Activated CD8-positive, alpha-beta memory T cell treated with anti-CD3 and anti-CD28 coated beads, Interleukin-2, amount 10 ng/mL, durations not matched to agents 7 days and 5 days (primary cell): ENCODE measurements at regions of chr6 and their contacts with region 1.

Region 1: DNA sequence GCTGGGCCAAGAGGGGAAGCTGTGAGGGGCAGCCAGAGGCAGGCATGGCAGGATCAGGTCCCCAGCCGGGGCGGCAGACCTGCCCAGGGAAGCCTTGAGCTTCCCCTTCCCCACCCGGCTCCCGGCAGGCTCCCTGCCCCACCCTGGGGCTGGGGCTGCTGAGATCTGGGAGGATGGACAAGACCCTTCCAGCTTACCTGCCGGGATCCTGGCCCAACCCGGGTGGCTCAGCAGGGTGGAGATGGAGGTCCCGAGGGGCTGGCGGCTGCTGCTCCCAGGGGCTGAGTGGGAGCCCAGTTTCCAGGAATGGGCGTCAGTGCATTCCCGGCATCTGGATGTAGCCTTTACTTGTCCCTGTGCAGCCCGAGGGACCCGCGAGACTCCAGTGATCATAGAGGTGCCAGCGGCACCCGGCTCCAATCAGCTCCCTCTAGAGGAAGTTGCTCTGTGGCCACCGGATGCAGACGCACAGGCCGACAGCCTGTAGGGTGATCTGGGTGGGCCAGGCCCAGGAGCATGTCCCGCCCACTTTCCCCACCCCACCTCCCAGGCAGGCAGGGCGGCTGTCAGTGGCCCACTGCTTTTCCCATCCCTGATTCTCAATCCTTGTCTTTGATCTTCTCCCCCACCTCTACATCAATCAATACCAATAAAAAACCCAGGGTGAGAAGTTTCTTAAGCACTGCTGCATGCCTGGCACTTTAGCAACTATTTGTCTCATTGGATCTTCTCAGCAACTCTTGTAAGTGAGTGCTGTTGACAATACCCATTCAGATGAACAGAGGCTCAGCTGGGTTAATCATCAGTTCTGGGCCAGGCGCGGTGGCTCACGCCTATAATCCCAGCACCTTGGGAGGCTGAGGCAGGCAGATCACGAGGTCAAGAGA is at the start of gene BAK1:
- DNase-seq: peak; percentile 95
- ATAC-seq: peak; percentile 96
- H3K4me3 Mint-ChIP-seq: peak within 1 kb of the TSS; percentile 99
- H3K27ac Mint-ChIP-seq: peak within 1 kb of the TSS; percentile 97
- H3K4me1 Mint-ChIP-seq: peaks cover 39% of the 10 kb centered on the region
- H3K27me3 Mint-ChIP-seq: no peaks in the 10 kb centered on the region
- total RNA-seq, gene BAK1: 70.9 to 74.4 TPM

Region 2: DNA sequence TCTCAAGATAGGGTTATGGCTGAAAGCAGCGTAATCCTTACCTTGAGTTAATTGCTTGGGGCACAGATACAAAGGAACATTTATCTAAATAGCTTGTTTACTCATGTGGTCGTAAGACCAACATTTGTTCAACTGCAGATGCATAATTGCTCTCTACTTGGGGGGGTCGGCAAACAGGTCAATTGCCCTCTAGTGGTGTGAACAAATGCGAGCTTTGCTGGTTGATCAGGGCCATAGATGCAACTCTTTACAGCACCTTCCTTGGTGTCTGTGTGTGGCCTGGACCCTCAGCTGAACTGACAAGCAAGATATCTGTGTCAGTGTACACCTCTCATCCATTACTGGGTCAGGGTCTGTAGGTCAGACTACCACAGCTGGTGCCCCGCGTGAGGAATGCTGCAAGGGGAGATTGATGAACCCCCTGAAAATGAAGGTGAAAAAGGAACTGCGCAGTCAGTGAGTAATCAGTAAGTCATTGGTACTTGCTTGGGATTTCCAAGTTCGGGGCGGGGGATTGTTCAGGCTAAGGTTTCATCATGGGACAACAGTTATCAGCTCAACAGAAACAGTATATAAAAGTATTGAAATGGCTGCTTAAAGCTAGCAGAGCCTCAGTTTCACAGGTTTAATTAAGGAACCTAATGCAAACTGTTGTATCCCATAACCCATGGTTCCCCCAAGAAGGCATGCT is 530.6 kb before region 1 on chr6:
- CTCF ChIA-PET with region 1: no interaction called
- DNase-seq: no peak
- ATAC-seq: peak; percentile 33
- H3K4me3 Mint-ChIP-seq: no peak overlapping the region
- H3K27ac Mint-ChIP-seq: no peak overlapping the region
- H3K4me1 Mint-ChIP-seq: no peaks in the 10 kb centered on the region
- H3K27me3 Mint-ChIP-seq: peaks cover 84% of the 10 kb centered on the region

Region 3: GRCh38 chr6:33417903-33418689 is 162.0 kb before region 1 on chr6 and contains the start of gene CUTA:
- CTCF ChIA-PET with region 1: interaction called, 12 read pairs
- DNase-seq: peak; percentile 100
- ATAC-seq: peak; percentile 90
- H3K4me3 Mint-ChIP-seq: peak within 1 kb of the TSS; percentile 97
- H3K27ac Mint-ChIP-seq: peak within 1 kb of the TSS; percentile 99
- H3K4me1 Mint-ChIP-seq: peaks cover 58% of the 10 kb centered on the region
- H3K27me3 Mint-ChIP-seq: peaks cover 15% of the 10 kb centered on the region
- total RNA-seq, gene CUTA: 196 to 197 TPM

Region 4: GRCh38 chr6:33534702-33535101 is 45.4 kb before region 1 on chr6:
- CTCF ChIA-PET with region 1: interaction called, 16 read pairs
- DNase-seq: no peak
- ATAC-seq: no peak
- H3K4me3 Mint-ChIP-seq: peak overlapping the region; percentile 73
- H3K27ac Mint-ChIP-seq: no peak overlapping the region
- H3K4me1 Mint-ChIP-seq: peaks cover 27% of the 10 kb centered on the region
- H3K27me3 Mint-ChIP-seq: no peaks in the 10 kb centered on the region

Region 5: DNA sequence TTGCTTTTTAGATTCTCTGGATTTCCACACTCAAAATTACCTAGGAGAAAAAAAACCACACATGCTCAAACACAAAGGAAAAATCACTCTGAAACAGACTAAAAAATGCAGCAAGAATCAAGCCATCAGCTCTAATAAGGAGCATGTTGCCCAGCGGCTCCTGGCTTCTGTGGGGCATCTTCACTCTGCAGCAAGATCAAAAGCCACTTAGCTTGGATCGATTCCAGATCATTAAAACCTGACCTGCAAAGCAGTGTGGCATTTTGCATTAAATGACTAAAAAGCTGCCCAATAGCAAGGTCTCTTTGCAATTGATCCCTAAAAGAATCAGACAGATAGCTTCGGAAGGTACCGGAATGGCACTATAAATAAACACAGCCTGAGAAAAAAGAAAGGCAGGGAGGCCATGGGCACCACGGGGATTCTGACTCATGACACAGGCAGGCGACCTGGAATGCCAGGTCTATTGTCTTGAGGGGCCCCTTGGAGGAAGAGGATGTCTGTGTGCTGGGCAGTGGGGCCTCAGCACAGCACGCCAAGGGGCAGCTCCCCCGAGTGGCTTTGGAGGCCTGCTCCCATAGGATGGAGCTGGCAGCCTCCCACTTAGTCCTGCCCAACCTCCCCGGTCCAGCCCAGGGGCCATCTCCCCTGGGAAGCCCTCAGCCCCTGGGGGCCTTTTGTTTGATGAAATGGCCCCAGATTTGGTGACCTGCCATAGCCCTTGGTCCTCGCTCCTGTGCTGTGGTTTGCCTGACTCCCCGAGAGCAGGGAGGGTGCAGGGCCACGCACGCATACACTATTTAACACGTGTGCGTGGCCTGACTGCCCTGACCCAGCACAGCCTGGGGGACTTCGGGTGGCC is 201.3 kb after region 1 on chr6:
- CTCF ChIA-PET with region 1: no interaction called
- DNase-seq: no peak
- ATAC-seq: no peak
- H3K4me3 Mint-ChIP-seq: no peak overlapping the region
- H3K27ac Mint-ChIP-seq: no peak overlapping the region
- H3K4me1 Mint-ChIP-seq: peaks cover 20% of the 10 kb centered on the region
- H3K27me3 Mint-ChIP-seq: no peaks in the 10 kb centered on the region